ENCODE measurements at regions of chr2 and their contacts with region 1.

Region 1: DNA sequence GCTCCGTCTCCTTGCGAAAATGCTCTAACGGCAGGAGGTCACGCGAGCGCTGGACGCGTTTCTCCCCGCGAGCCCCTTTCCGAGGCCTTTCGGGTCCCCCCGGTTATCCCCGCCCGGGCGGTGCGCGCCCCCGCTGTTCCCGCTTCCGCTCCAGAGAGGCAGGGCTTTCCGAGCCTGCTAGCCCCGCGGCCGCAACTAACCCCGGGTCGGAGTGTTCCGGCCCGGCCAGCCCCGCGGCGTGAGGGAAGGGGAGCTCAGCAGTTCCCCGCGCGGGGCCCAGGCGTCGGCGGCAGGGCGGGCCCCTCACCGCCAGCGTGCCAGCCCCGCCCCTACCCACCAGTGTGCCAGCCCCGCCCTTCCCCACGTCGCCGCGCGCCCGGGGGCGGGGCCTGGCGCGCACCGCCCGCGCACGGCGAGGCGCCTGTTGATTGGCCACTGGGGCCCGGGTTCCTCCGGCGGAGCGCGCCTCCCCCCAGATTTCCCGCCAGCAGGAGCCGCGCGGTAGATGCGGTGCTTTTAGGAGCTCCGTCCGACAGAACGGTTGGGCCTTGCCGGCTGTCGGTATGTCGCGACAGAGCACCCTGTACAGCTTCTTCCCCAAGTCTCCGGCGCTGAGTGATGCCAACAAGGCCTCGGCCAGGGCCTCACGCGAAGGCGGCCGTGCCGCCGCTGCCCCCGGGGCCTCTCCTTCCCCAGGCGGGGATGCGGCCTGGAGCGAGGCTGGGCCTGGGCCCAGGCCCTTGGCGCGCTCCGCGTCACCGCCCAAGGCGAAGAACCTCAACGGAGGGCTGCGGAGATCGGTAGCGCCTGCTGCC is at the start of gene MSH6:
- DNase-seq: peak; percentile 86
- H3K4me3 ChIP-seq: peak within 1 kb of the TSS; percentile 68 to 94 (median 94)
- H3K27ac ChIP-seq: peak within 1 kb of the TSS; percentile 71
- H3K4me1 ChIP-seq: peaks cover 6% of the 10 kb centered on the region
- H3K27me3 ChIP-seq: no peaks in the 10 kb centered on the region
- CTCF ChIP-seq: no peak
- total RNA-seq, gene MSH6: 25.2 to 63.8 TPM

Region 2: GRCh38 chr2:47708801-47709499 is 73.9 kb before region 1 on chr2:
- CTCF ChIA-PET with region 1: interaction called, 14 read pairs
- dilution Hi-C with region 1: no loop called
- in situ Hi-C with region 1: no loop called
- intact Hi-C with region 1: no loop called
- DNase-seq: no peak
- H3K4me3 ChIP-seq: no peak overlapping the region
- H3K27ac ChIP-seq: no peak overlapping the region
- H3K4me1 ChIP-seq: no peaks in the 10 kb centered on the region
- H3K27me3 ChIP-seq: peaks cover 2% of the 10 kb centered on the region
- CTCF ChIP-seq: no peak

Region 3: DNA sequence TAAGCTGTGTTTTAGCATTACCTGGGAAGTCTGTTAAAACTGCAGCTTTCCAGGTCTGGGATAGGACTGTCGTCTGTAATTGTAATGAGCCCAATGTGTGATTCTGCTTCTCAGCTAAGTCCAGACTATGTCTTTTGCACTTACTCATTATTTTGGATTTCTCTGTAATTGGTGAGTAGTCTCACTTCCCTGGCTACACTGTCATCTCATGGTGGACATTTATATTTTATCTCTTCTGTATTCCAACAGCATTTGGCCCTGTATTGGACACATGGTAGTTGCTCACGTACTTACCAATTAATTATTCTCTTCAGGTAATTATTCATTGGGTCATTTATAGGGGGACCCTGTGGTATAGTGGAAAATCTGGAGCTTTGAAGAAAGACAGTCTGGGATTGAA is 944.7 kb after region 1 on chr2:
- CTCF ChIA-PET with region 1: no interaction called
- dilution Hi-C with region 1: no loop called
- in situ Hi-C with region 1: no loop called
- intact Hi-C with region 1: no loop called
- DNase-seq: no peak
- H3K4me3 ChIP-seq: no peak overlapping the region
- H3K27ac ChIP-seq: no peak overlapping the region
- H3K4me1 ChIP-seq: no peaks in the 10 kb centered on the region
- H3K27me3 ChIP-seq: peaks cover 1% of the 10 kb centered on the region
- CTCF ChIP-seq: no peak